ENCODE measurements at regions of chr11 and their contacts with region 1.

Region 1: DNA sequence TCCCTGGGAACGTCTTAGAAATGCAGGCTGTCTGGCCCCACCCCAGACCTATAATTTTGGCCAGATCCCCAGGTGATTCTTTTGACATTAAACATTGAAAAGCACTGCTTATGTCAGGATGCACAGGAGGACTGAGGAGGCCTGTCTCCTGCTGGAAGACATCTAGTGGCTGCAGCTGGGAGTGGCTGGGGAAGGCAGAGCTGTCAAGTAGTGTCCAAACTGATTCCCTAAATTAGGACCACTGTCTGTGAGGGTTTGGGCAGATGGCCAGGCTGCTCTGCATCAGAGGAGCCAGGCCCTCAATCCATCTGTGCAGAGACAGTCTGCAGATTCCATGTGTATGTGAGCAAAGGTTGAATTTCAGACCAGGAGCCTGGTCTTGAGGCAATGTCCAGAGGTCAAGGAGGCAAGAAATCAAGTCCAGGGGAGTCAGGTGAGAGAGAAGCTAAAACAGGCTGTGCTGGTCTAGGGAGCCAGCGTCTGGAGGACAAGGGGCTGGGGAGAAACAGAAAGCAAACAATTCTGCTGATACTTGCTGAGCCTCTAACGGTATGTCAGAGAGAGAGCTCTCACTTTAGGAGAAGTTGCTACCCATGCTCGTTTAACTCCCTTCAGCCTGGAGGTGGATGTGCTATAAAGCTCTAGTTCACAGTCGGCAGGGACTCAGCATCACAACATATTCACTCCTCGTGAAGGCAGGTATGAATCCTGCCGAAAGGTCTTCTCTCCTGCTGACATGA is 15.3 kb upstream of the SYTL2 start:
- DNase-seq: peak; percentile 79
- H3K4me3 Mint-ChIP-seq: peak overlapping the region; percentile 66
- H3K27ac Mint-ChIP-seq: peak overlapping the region; percentile 67
- H3K4me1 Mint-ChIP-seq: peaks cover 66% of the 10 kb centered on the region
- H3K27me3 Mint-ChIP-seq: no peaks in the 10 kb centered on the region

Region 2: GRCh38 chr11:85407648-85408047 is 418.6 kb before region 1 on chr11:
- intact Hi-C with region 1: no loop called
- DNase-seq: no peak
- H3K4me3 Mint-ChIP-seq: no peak overlapping the region
- H3K27ac Mint-ChIP-seq: no peak overlapping the region
- H3K4me1 Mint-ChIP-seq: no peaks in the 10 kb centered on the region
- H3K27me3 Mint-ChIP-seq: no peaks in the 10 kb centered on the region

Region 3: GRCh38 chr11:85627998-85628770 is 198.1 kb before region 1 on chr11 and contains the start of gene TMEM126B:
- intact Hi-C with region 1: loop called (anchors 2 kb)
- DNase-seq: peak; percentile 99
- H3K4me3 Mint-ChIP-seq: peak within 1 kb of the TSS; percentile 96
- H3K27ac Mint-ChIP-seq: peak within 1 kb of the TSS; percentile 95
- H3K4me1 Mint-ChIP-seq: peaks cover 43% of the 10 kb centered on the region
- H3K27me3 Mint-ChIP-seq: peaks cover 2% of the 10 kb centered on the region
- total RNA-seq, gene TMEM126B: 52.2 and 54.4 TPM in 2 replicates

Region 4: GRCh38 chr11:85694386-85694980 is 131.8 kb before region 1 on chr11:
- intact Hi-C with region 1: loop called (anchors 2 kb)
- DNase-seq: peak; percentile 74
- H3K4me3 Mint-ChIP-seq: no peak overlapping the region
- H3K27ac Mint-ChIP-seq: no peak overlapping the region
- H3K4me1 Mint-ChIP-seq: peaks cover 21% of the 10 kb centered on the region
- H3K27me3 Mint-ChIP-seq: peaks cover 2% of the 10 kb centered on the region

Region 5: DNA sequence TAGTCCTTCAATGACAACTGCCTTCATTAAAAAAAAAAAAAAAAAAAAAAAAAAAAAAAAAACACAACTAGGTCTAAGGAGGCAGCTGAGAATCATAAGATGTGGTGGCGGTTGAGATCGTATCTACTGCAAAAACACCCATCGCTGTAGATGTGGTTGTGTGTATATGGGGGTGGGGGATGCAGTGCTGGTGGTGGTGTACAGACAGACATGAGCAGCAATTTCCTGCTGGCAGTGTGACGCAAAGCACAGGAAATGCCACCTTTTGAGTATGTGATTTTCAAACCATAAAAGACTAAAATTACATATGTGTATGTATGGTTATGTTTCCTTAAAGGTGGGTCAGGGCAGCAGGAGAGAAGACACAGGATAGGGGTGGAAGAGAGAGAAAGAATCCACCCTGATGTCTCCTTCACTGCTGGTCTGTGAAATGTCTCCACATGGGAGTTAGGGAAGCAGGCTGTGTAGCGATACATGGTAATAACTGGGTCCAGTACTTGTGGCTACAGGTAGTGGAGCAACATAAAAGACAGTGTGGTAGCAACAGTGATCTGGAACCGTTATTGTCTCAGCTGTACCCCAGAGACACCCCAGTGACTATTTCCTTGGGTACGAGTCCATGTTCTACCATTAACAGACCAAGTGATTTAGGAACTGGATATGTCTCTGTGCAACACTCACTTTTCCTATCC is 73.2 kb before region 1 on chr11:
- intact Hi-C with region 1: loop called (anchors 1 kb)
- DNase-seq: peak; percentile 97
- H3K4me3 Mint-ChIP-seq: peak overlapping the region; percentile 78
- H3K27ac Mint-ChIP-seq: peak overlapping the region; percentile 97
- H3K4me1 Mint-ChIP-seq: peaks cover 88% of the 10 kb centered on the region
- H3K27me3 Mint-ChIP-seq: peaks cover 2% of the 10 kb centered on the region

Region 6: GRCh38 chr11:85766721-85767161 is 59.5 kb before region 1 on chr11:
- intact Hi-C with region 1: no loop called
- DNase-seq: no peak
- H3K4me3 Mint-ChIP-seq: no peak overlapping the region
- H3K27ac Mint-ChIP-seq: no peak overlapping the region
- H3K4me1 Mint-ChIP-seq: peaks cover 55% of the 10 kb centered on the region
- H3K27me3 Mint-ChIP-seq: no peaks in the 10 kb centered on the region

Region 7: DNA sequence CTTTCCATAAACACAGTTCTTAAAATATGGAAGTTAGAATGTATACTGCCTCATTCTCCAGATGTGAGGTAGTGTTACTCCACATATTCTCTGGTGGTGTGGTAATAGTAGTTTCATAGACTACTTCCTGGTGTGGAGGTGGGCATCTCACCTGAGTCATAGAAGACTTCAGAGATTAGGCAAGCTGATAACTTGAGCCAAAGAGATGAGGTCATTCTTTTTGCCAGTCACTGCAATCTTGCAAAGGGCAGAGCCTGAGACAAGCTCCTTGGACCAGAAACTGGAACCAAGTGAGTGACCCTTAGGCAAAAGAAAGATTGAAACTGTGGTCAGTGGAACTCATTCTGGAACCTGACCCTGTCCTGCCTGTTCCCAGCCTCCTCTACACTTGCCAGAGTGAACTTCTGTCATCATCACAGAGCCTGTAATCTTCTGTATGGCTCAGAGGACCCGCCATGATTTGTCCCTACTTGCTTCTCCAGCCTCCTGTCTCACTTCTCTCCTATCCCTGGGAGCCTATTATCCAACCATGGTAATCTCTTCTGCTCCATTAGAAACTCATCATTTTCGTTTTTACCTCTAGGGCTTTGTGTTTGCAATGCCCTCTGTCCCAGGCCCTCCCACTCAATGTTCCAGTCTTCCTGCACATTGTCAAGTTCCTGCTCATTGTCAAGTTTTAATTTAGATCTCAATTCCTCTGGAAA is 18.3 kb after region 1 on chr11:
- intact Hi-C with region 1: loop called (anchors 2 kb)
- DNase-seq: no peak
- H3K4me3 Mint-ChIP-seq: no peak overlapping the region
- H3K27ac Mint-ChIP-seq: no peak overlapping the region
- H3K4me1 Mint-ChIP-seq: peaks cover 20% of the 10 kb centered on the region
- H3K27me3 Mint-ChIP-seq: peaks cover 2% of the 10 kb centered on the region

Measured in activated CD4-positive, alpha-beta T cell treated with anti-CD3 and anti-CD28 coated beads, Interleukin-2, amount 10 ng/mL, durations not matched to agents 24 days and 14 days (primary cell).